ENCODE measurements at regions of chr11 and their contacts with region 1.

Region 1: GRCh38 chr11:100980156-100980555 is 149.5 kb downstream of the PGR start:
- DNase-seq: no peak
- ATAC-seq: peak; percentile 56

Region 2: GRCh38 chr11:101323997-101324396 is 343.8 kb after region 1 on chr11:
- intact Hi-C with region 1: loop called (anchors 10 kb)
- DNase-seq: no peak
- ATAC-seq: peak; percentile 48

Region 3: DNA sequence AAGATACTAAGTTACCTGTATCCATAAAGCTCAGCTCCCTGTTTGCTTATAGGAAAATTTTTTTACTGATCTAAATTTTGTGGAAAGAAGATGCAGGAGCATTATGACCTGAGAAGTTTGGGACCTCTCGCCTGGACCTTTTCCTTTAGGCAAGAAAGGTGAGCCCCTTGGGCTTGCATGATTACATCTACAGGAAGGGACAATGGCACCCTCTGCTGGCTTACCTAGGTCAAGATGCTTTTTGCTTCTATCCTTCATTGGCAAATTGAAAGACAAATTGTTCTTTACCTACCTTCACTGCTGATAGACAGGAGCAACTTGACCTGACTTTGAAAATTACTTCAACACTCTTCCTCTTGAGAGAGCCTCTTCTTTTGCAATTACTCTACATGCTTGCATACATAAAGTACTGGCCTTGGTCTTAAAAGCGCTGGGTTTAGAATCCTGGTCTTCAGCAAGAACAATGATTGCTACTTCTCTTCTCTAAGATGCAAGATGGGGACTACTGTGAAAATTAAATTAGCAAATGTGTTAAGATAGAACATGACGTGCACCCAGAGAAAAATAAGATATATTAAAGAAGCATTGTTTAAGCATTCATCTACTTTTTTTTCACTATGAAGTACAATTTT is 456.5 kb after region 1 on chr11:
- intact Hi-C with region 1: loop called (anchors 5 kb)
- DNase-seq: no peak
- ATAC-seq: peak; percentile 59

Region 4: DNA sequence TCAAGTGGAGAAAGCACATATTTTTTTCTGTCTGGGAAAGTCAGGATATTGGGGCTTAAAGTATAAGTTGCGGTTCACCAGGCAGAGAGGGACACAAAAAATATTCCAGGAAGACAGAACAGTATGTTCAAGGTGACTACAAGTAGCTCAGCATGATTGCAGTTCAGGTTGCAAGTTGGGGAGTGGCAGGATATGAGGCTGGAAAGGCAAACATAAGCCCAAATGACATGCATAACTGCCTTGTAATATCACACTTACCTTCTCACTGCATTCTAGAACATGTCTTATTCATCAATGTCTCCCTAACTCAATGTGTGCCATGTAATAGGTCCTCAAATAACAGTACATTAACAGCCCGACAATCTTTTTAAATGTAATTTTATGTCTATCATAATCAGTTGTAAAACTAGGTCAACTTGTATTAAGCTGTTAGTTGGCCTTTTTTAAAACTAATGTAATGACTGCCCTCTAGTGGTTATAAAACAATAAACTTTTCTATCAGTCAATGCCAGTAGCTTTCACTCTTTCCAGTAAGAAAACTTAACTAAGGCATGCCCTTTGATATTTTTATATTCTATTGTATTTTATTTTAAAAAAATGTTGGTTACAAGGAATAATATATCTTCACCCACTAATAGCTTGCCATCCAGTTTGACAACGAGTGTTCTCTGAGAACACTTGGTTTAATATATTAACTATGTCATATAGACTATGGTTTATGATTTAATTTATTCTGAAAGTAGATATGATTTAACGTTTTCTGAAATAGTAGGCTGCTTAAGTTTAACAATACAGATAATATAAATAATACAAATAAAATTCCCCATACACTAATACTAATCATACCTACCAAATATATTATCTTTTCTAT is 1027.6 kb after region 1 on chr11:
- intact Hi-C with region 1: loop called (anchors 10 kb)
- DNase-seq: no peak
- ATAC-seq: peak; percentile 72

Measured in Right ventricle myocardium superior (tissue), 1 donor.